IMR-90 (cell line): ENCODE measurements at regions of chr1 and their contacts with region 1.

Region 1: DNA sequence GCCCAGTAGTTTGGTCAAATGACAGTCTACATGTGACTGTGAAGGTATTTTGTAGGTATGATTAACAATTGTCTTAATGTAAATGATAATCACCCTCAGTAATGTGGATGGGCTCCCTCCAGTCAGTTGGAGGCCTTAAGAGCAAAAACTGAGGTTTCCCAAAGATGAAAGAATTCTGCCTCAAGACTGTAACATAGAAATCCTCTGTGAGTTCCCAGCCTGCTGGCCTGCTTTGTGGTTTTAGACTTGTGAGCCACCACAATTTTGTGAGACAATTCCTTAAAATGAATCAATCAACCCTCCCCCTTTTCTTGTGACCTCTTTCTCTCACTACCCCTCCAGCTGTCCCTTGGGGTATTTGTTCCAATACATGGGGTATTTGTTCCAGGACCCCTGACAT is 226.4 kb upstream of the DPYD start:
- DNase-seq: no peak
- ATAC-seq: no peak
- H3K4me3 ChIP-seq: no peak overlapping the region
- H3K27ac ChIP-seq: no peak overlapping the region
- H3K4me1 ChIP-seq: no peaks in the 10 kb centered on the region
- H3K27me3 ChIP-seq: no peaks in the 10 kb centered on the region
- CTCF ChIP-seq: no peak
- POLR2A ChIP-seq: no peak
- RAD21 ChIP-seq: no peak

Region 2: DNA sequence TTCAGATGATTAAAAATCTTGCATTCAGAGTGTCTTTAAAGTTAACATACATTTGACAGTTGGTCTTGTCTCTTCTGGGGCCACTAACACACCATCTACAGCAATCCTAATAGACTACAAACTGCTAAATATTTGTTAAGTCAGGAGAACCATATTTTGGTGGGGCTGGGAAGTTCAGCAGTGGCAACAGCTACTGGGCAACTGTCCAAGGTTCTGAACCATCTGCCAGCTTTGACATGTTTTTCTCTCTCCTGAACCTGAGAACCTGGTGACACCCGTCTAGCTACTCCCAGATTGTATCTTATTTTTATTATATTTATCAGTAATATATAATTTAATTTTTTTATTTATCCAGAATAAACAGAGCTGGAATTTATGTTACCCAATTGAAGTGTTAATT is 27.5 kb before region 1 on chr1:
- CTCF ChIA-PET with region 1: no interaction called
- POLR2A ChIA-PET with region 1: no interaction called
- dilution Hi-C with region 1: no loop called
- in situ Hi-C with region 1: no loop called
- intact Hi-C with region 1: loop called (anchors 1 kb)
- DNase-seq: peak; percentile 22
- ATAC-seq: no peak
- H3K4me3 ChIP-seq: no peak overlapping the region
- H3K27ac ChIP-seq: no peak overlapping the region
- H3K4me1 ChIP-seq: no peaks in the 10 kb centered on the region
- H3K27me3 ChIP-seq: no peaks in the 10 kb centered on the region
- CTCF ChIP-seq: no peak
- POLR2A ChIP-seq: no peak
- RAD21 ChIP-seq: no peak

Region 3: GRCh38 chr1:98133131-98133530 is 14.1 kb before region 1 on chr1:
- CTCF ChIA-PET with region 1: no interaction called
- POLR2A ChIA-PET with region 1: no interaction called
- dilution Hi-C with region 1: no loop called
- in situ Hi-C with region 1: no loop called
- intact Hi-C with region 1: loop called (anchors 1 kb)
- DNase-seq: no peak
- ATAC-seq: no peak; the same call in 1 of the 2 replicates
- H3K4me3 ChIP-seq: no peak overlapping the region
- H3K27ac ChIP-seq: no peak overlapping the region
- H3K4me1 ChIP-seq: peaks cover 2% of the 10 kb centered on the region; the same call in 1 of the 2 replicates
- H3K27me3 ChIP-seq: no peaks in the 10 kb centered on the region
- CTCF ChIP-seq: no peak
- POLR2A ChIP-seq: no peak
- RAD21 ChIP-seq: no peak